T-cell (primary cell): ENCODE measurements at regions of chr7 and their contacts with region 1.

Region 1: DNA sequence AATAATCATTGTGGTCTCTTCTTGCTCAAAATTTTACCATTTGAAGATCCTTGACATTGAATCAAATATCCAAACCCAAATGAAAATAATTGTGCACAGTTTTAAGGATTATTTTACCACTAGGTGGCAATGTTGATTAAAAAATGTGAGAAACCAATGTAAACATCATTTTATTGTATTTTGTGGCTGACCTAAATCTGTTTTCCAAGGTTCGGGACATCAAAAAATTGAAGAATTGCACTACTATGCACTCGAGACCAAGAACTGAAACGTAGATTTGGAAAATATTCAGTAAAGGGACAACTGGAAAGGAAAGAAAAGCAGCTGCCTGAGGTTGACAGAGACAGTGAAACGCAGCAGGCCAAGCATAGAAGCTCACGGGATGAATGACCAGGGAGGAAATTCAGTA is 259.3 kb downstream of the SNX13 start:
- DNase-seq: peak in 1 of 35 experiments; percentile 36
- ATAC-seq: no peak
- H3K4me3 ChIP-seq: no peak overlapping the region
- H3K4me3 Mint-ChIP-seq: no peak overlapping the region
- H3K27ac ChIP-seq: no peak overlapping the region
- H3K27ac Mint-ChIP-seq: no peak overlapping the region
- H3K4me1 ChIP-seq: no peaks in the 10 kb centered on the region
- H3K4me1 Mint-ChIP-seq: no peaks in the 10 kb centered on the region
- H3K27me3 ChIP-seq: peaks cover 0 to 3% of the 10 kb centered on the region in 2 experiments
- H3K27me3 Mint-ChIP-seq: no peaks in the 10 kb centered on the region

Region 2: DNA sequence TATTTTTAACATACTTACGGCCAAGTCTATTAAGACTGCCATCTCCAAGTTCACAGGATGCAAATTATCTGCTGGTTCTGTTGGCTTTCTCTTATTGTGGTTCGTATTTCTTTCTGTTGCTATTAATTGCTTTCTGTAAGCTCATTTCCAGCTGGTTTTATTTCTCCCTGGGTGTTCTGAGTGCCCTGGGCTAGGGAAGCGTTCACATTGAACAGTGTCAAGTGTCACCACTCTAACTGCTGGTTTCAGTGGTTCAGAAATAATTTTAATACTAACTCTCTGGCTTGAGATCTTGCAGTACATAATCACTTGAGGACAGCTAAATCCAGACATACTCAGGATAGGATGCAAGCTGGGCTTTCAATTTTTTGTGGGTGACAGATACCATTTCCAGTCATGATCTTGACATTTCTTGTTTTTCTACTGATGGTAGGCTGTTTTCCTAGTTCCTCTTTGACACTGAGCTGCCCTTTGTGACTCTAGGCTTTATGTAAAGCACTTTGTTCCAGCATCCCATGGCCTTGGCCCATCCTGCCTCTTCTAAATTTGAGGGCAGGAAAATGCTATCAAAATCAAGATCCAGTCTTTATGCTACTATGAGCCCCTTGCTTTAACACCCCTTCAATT is 141.7 kb after region 1 on chr7:
- CTCF ChIA-PET with region 1: interaction called in 1 of 2 experiments, 10 read pairs
- POLR2A ChIA-PET with region 1: no interaction called
- DNase-seq: no peak
- ATAC-seq: no peak
- H3K4me3 ChIP-seq: no peak overlapping the region
- H3K4me3 Mint-ChIP-seq: no peak overlapping the region
- H3K27ac ChIP-seq: no peak overlapping the region
- H3K27ac Mint-ChIP-seq: no peak overlapping the region
- H3K4me1 ChIP-seq: no peaks in the 10 kb centered on the region
- H3K4me1 Mint-ChIP-seq: no peaks in the 10 kb centered on the region
- H3K27me3 ChIP-seq: no peaks in the 10 kb centered on the region
- H3K27me3 Mint-ChIP-seq: no peaks in the 10 kb centered on the region